ENCODE measurements at regions of chr1 and their contacts with region 1.

Region 1: GRCh38 chr1:157090196-157090647 is 9.4 kb downstream of the ETV3L start:
- DNase-seq: peak; percentile 60
- H3K4me3 ChIP-seq: no peak overlapping the region
- CTCF ChIP-seq: peak; percentile 93

Region 2: GRCh38 chr1:157073944-157074767 is 16.1 kb before region 1 on chr1:
- CTCF ChIA-PET with region 1: interaction called, 40 read pairs
- POLR2A ChIA-PET with region 1: interaction called, 3 read pairs
- DNase-seq: no peak
- H3K4me3 ChIP-seq: no peak overlapping the region
- CTCF ChIP-seq: peak; percentile 72

Region 3: GRCh38 chr1:157105988-157106812 is 16.0 kb after region 1 on chr1:
- CTCF ChIA-PET with region 1: interaction called, 108 read pairs
- POLR2A ChIA-PET with region 1: interaction called, 3 read pairs
- DNase-seq: peak; percentile 74
- H3K4me3 ChIP-seq: no peak overlapping the region
- CTCF ChIP-seq: no peak

Region 4: GRCh38 chr1:157117527-157118057 is 27.4 kb after region 1 on chr1:
- CTCF ChIA-PET with region 1: interaction called, 28 read pairs
- POLR2A ChIA-PET with region 1: no interaction called
- DNase-seq: no peak
- H3K4me3 ChIP-seq: no peak overlapping the region
- CTCF ChIP-seq: no peak

Region 5: GRCh38 chr1:157138220-157139051 is 48.2 kb after region 1 on chr1 and contains the start of gene ETV3:
- CTCF ChIA-PET with region 1: interaction called, 35 read pairs
- POLR2A ChIA-PET with region 1: no interaction called
- DNase-seq: peak; percentile 53
- H3K4me3 ChIP-seq: peak within 1 kb of the TSS; percentile 95
- CTCF ChIP-seq: no peak

Region 6: DNA sequence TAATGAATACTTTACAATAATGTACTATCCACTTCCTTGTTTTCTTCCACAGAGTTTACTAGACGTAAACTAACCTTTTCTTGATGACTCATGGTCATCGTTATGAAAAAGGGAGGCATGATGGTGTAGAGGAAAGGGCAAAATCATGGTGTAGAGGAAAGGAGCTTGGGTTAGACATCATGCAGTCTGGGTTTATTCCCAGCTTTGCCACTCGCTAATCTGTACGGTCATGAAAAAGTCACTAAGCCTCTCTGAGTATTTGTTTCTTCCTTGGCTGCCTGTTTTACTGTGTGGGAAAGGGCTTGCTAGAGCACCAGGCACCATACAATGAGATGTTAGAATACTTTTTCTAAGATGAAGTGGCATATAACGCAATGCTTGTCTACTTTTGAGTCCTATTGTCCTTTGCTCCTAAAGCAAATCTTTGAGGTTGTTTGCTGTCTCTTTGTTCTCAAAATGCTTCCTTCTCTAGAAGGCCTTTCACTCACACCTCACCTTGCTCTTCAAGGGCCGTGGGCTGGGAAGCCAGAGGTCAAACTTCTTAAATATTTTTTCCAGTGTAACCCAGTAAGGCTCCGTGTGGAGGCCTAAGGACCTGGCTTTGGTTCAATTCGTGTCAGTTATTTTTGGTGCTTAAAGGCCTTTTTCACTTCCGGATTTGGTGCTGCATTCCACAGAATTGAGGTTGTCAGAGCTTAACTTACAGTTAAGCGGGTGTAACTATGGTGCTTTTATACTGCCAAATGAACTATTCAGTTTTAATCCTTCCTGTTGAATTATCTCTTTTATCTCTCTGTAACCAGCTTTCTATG is 57.9 kb after region 1 on chr1:
- CTCF ChIA-PET with region 1: interaction called, 478 read pairs
- POLR2A ChIA-PET with region 1: interaction called, 3 read pairs
- DNase-seq: no peak
- H3K4me3 ChIP-seq: no peak overlapping the region
- CTCF ChIP-seq: no peak

Region 7: DNA sequence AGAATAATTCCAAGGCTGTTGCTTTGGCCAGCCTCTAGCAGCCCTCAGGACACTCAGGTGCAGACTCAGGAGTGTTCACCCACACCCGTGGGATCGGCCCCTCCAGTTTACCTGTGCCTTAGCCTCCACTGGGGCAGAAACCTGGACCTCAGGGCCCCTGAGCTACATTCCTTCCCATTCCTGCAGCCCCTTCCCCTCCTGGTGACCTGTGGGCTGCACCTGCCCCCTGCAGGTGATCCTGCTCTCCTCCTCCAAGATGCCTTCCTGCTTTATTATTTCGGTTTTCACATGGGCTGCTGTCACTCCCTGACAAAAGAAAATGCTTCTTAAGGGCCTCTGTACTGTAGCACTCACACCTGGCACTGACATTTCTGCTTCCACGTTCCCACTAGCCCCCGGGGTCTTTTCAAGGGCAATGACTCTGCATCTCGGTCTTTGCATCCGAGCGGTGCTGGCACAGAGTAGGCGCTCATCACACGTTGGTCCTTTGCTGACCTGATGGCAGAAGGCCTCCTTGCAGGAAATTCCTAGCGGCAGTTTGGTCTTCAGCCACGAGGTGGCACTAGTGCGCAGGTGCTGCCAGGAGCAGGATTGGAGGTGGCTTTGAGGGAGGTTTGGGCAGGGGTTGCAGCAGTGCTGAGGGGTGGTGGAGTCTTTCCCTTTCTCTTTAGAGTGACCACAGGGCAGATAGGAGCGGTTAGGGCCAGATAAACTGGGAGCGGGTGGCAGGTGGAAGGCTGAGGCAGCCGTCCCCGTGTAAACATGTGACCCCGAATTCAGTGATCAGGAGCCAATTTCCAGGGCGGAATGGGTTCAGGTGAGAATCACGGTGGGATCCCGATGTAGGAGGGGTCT is 73.3 kb after region 1 on chr1:
- CTCF ChIA-PET with region 1: interaction called, 478 read pairs
- POLR2A ChIA-PET with region 1: no interaction called
- DNase-seq: no peak
- H3K4me3 ChIP-seq: no peak overlapping the region
- CTCF ChIP-seq: peak; percentile 95

Measured in AG04449 (cell line).